HepG2 (cell line): ENCODE measurements at regions of chr6 and their contacts with region 1.

Region 1: GRCh38 chr6:188821-189655 is 103.2 kb upstream of the DUSP22 start:
- DNase-seq: peak; percentile 90
- ATAC-seq: peak; percentile 93
- H3K4me3 ChIP-seq: no peak overlapping the region
- H3K27ac ChIP-seq: no peak overlapping the region
- H3K4me1 ChIP-seq: peaks cover 53% of the 10 kb centered on the region
- H3K27me3 ChIP-seq: no peaks in the 10 kb centered on the region; a peak in 2 of 5 replicates
- CTCF ChIP-seq: peak; percentile 99
- EP300 ChIP-seq: no peak
- POLR2A ChIP-seq: no peak
- RAD21 ChIP-seq: peak; percentile 99

Region 2: DNA sequence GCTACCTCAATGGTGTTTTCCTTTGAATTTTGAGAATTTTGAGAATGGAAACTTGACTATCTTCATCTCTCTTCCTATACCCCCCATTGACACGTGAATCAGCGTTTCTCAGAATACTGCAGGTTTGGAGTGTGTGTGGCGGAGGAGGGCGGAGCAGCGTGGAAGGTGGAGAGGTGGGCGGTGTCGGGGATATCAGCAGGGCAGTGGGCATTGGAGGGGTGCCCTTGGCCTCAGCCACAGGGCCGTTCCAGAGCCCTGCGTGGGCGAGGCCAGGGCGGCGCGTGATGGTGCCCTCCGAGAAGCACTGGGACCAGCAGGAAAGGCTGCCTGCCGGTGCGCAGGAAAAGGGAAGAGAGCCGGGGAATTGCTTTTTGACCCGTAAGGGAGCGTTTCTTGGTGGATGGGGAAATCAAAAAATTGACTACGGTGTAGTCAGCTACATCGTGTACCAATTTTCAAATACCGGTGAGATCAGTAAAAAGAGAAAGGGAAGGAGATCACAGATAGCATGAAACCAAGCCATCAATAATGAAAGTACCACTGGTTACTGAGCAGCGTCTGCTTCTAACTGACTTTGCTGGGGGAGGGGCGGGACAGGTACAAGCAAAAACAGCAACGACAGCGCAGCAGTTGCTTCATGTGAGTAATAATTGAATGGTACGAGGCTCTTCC is 20.5 kb after region 1 on chr6:
- CTCF ChIA-PET with region 1: no interaction called
- POLR2A ChIA-PET with region 1: no interaction called
- in situ Hi-C with region 1: no loop called
- intact Hi-C with region 1: no loop called
- DNase-seq: no peak
- ATAC-seq: no peak
- H3K4me3 ChIP-seq: no peak overlapping the region
- H3K27ac ChIP-seq: no peak overlapping the region
- H3K4me1 ChIP-seq: peaks cover 21% of the 10 kb centered on the region
- H3K27me3 ChIP-seq: peaks cover 4 to 50% of the 10 kb centered on the region in 2 experiments; a peak in 4 of 5 replicates
- CTCF ChIP-seq: no peak
- EP300 ChIP-seq: no peak
- POLR2A ChIP-seq: no peak
- RAD21 ChIP-seq: no peak

Region 3: DNA sequence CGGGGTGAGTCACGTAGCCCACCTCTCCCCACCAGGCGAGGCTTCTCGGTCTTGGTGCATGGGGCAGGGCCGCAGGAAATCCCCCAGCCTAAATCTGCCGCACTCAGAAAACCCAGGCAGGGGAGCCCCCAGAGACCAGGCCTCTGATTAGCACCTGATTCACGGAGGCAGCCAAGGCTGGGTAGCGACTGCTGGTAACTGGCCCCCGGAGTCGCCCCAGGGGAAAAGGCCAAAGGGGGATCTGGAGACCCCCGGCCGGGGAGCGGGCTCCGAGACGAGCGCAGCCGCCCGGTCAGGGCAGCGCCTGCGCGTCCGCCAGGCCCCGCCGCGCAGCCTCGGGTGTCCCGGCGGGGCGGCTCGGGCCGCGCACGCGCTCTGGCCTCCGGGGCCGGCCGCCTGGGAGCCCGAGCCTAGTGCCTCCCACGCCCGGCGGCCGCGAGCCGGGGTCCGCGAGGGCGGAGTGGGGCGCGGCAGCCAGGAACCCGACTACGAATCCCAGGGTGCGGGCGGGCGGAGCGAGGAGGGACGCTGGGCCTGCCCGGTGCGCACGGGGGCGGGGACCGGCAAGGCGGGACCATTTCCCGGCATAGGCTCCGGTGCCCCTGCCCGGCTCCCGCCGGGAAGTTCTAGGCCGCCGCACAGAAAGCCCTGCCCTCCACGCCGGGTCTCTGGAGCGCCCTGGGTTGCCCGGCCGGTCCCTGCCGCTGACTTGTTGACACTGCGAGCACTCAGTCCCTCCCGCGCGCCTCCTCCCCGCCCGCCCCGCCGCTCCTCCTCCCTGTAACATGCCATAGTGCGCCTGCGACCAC is 102.9 kb after region 1 on chr6 and contains the start of gene DUSP22:
- CTCF ChIA-PET with region 1: no interaction called
- POLR2A ChIA-PET with region 1: no interaction called
- in situ Hi-C with region 1: loop called (anchors 5 kb)
- intact Hi-C with region 1: loop called (anchors 1 kb)
- DNase-seq: peak; percentile 80
- ATAC-seq: peak; percentile 89
- H3K4me3 ChIP-seq: peak within 1 kb of the TSS; percentile 61 to 85 (median 72)
- H3K27ac ChIP-seq: peak within 1 kb of the TSS; percentile 84
- H3K4me1 ChIP-seq: peaks cover 22% of the 10 kb centered on the region
- H3K27me3 ChIP-seq: peaks cover 0 to 18% of the 10 kb centered on the region in 2 experiments; a peak in 4 of 5 replicates
- CTCF ChIP-seq: no peak
- EP300 ChIP-seq: 0 out of 4 replicates have a peak, but pooled peaks have one; percentile 7 to 22
- POLR2A ChIP-seq: peak; percentile 81 to 83
- RAD21 ChIP-seq: peak; percentile 61
- total RNA-seq, gene DUSP22: 29.1 and 32.8 TPM in 2 replicates

Region 4: GRCh38 chr6:360764-361373 is 171.8 kb after region 1 on chr6:
- CTCF ChIA-PET with region 1: no interaction called
- POLR2A ChIA-PET with region 1: no interaction called
- in situ Hi-C with region 1: no loop called
- intact Hi-C with region 1: loop called (anchors 1 kb)
- DNase-seq: no peak
- ATAC-seq: peak; percentile 18; the same call in 2 of the 3 replicates
- H3K4me3 ChIP-seq: no peak overlapping the region
- H3K27ac ChIP-seq: no peak overlapping the region
- H3K4me1 ChIP-seq: peaks cover 16% of the 10 kb centered on the region
- H3K27me3 ChIP-seq: peaks cover 0 to 18% of the 10 kb centered on the region in 2 experiments; a peak in 4 of 5 replicates
- CTCF ChIP-seq: no peak
- EP300 ChIP-seq: no peak
- POLR2A ChIP-seq: no peak
- RAD21 ChIP-seq: no peak

Region 5: GRCh38 chr6:408599-409102 is 219.6 kb after region 1 on chr6:
- CTCF ChIA-PET with region 1: interaction called, 58 read pairs
- POLR2A ChIA-PET with region 1: no interaction called
- in situ Hi-C with region 1: no loop called
- intact Hi-C with region 1: loop called (anchors 1 kb)
- DNase-seq: peak; percentile 65
- ATAC-seq: peak; percentile 100
- H3K4me3 ChIP-seq: 0 out of 6 replicates have a peak overlapping the region, but pooled peaks of 1 of the 3 experiments have one; percentile 2
- H3K27ac ChIP-seq: no peak overlapping the region
- H3K4me1 ChIP-seq: peaks cover 9% of the 10 kb centered on the region; the same call in 1 of the 2 replicates
- H3K27me3 ChIP-seq: peaks cover 0 to 64% of the 10 kb centered on the region in 2 experiments; a peak in 4 of 5 replicates
- CTCF ChIP-seq: peak; percentile 60
- EP300 ChIP-seq: no peak
- POLR2A ChIP-seq: no peak
- RAD21 ChIP-seq: peak; percentile 78

Region 6: GRCh38 chr6:551405-551804 is 362.4 kb after region 1 on chr6:
- CTCF ChIA-PET with region 1: no interaction called
- POLR2A ChIA-PET with region 1: no interaction called
- in situ Hi-C with region 1: no loop called
- intact Hi-C with region 1: loop called (anchors 5 kb)
- DNase-seq: peak; percentile 12
- ATAC-seq: peak; percentile 80
- H3K4me3 ChIP-seq: no peak overlapping the region
- H3K27ac ChIP-seq: no peak overlapping the region
- H3K4me1 ChIP-seq: no peaks in the 10 kb centered on the region
- H3K27me3 ChIP-seq: no peaks in the 10 kb centered on the region
- CTCF ChIP-seq: peak; percentile 45
- EP300 ChIP-seq: no peak
- POLR2A ChIP-seq: no peak
- RAD21 ChIP-seq: no peak

Region 7: DNA sequence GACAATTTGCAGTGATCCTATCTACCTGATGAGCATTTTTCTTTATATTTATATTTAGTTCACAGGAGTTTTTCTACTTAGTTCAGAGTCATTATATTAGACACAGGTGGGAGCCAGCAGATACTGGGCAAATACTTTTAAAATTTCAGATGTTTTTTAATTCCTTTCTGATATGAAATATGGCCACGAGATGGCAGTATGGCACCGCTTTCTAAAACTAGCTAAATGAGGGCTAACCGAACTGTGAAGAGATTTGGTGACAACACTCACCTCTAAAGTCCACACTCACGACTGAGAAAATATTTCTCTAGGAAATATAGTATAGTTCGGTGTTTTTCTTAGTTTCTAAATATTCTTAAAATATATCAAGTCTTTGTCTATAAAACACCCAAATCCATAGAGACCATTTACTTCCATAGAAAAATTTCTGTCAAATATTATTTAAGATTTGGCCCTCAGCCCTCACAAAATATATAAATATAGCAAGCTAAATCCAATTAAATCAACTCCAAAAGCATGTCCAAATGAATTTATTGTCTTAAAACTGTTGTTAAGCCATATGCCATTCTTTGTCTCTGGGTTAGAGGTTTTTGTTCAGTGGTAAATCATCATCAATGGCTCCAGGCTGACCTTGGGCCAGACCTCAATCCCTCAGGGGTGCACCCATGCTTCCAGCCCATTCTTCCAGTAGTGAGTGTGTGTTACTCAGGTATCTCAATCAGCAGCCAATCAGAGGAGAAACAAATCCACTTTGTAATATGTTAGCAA is 404.3 kb after region 1 on chr6:
- CTCF ChIA-PET with region 1: interaction called, 3 read pairs
- POLR2A ChIA-PET with region 1: no interaction called
- in situ Hi-C with region 1: no loop called
- intact Hi-C with region 1: loop called (anchors 2 kb)
- DNase-seq: peak; percentile 56
- ATAC-seq: peak; percentile 66
- H3K4me3 ChIP-seq: no peak overlapping the region
- H3K27ac ChIP-seq: no peak overlapping the region
- H3K4me1 ChIP-seq: no peaks in the 10 kb centered on the region
- H3K27me3 ChIP-seq: no peaks in the 10 kb centered on the region
- CTCF ChIP-seq: peak; percentile 72
- EP300 ChIP-seq: no peak
- POLR2A ChIP-seq: no peak
- RAD21 ChIP-seq: peak; percentile 56; the same call in 1 of the 2 replicates

Region 8: DNA sequence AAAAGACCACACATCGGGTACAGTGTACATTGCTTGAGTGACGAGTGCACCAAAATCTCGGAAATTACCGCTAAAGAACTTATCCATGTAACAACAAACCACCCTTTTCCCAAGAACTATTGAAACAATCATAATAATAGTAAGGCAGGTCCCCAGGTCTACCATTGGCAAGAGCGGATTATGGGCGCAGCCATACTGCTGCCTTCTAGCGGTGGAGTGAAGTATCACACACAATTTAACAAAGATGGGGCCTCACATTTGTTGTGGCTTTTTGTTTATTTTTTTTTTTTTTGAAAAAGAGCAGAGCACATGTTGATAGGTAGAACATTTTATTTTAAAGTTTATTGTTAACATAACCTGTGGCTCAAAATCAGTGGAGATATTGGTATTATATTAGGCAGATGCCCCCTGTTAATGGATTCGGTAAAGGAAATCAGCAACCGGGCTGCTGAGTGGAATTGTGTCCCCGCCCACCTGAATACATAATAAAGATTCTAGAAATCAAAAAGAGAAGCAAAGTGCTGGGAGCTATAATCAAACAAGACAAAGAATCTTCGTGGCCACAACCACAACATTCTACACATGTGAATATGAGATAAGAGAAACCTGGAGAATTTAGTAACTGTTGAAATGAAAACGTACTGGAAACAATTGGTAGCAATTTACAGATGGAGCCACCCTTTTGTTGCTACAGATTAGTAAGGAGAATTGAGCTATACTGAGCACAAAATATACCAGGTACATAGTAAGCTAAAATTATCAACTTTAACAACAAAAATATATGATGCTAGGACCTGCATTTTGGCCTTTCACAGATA is 598.1 kb after region 1 on chr6:
- CTCF ChIA-PET with region 1: interaction called, 3 read pairs
- POLR2A ChIA-PET with region 1: no interaction called
- in situ Hi-C with region 1: no loop called
- intact Hi-C with region 1: loop called (anchors 2 kb)
- DNase-seq: peak; percentile 35
- ATAC-seq: peak; percentile 68
- H3K4me3 ChIP-seq: no peak overlapping the region
- H3K27ac ChIP-seq: no peak overlapping the region
- H3K4me1 ChIP-seq: no peaks in the 10 kb centered on the region
- H3K27me3 ChIP-seq: peaks cover 0 to 26% of the 10 kb centered on the region in 2 experiments; a peak in 3 of 5 replicates
- CTCF ChIP-seq: peak; percentile 76
- EP300 ChIP-seq: no peak
- POLR2A ChIP-seq: no peak
- RAD21 ChIP-seq: peak; percentile 27; the same call in 1 of the 2 replicates